Activated CD4-positive, alpha-beta T cell treated with anti-CD3 and anti-CD28 coated beads for 36 hours (primary cell): ENCODE measurements at regions of chr7 and their contacts with region 1.

Region 1: GRCh38 chr7:132049462-132050304 is 493.3 kb upstream of the PODXL start:
- DNase-seq: peak; percentile 64
- ATAC-seq: no peak
- H3K4me3 Mint-ChIP-seq: no peak overlapping the region
- H3K27ac Mint-ChIP-seq: no peak overlapping the region
- H3K4me1 Mint-ChIP-seq: no peaks in the 10 kb centered on the region
- H3K27me3 Mint-ChIP-seq: peaks cover 13% of the 10 kb centered on the region

Region 2: DNA sequence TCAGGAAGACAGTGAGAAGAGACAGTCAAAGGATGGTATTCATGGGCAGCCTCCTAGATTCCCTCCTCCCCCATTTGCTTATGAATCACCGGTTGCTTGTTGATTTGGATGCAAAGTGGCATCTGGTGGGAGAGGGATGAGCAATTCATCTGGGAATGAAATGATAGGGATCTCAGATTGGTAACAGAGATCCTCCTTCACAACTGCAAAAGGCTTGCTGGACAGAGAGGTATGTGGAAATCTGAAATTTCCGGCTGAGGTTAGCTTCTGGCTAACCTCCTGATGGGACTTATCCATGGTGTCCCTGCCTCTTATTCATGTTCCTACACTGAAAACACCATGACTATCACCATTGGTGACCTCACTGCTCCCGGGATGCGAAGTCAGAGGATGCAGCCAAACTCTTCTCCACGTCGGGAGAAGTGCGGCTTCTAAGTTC is 444.8 kb before region 1 on chr7:
- CTCF ChIA-PET with region 1: no interaction called
- POLR2A ChIA-PET with region 1: no interaction called
- intact Hi-C with region 1: no loop called
- DNase-seq: no peak
- ATAC-seq: no peak
- H3K4me3 Mint-ChIP-seq: no peak overlapping the region
- H3K27ac Mint-ChIP-seq: no peak overlapping the region
- H3K4me1 Mint-ChIP-seq: no peaks in the 10 kb centered on the region
- H3K27me3 Mint-ChIP-seq: peaks cover 11% of the 10 kb centered on the region

Region 3: GRCh38 chr7:131859147-131859821 is 190.4 kb before region 1 on chr7:
- CTCF ChIA-PET with region 1: interaction called, 4 read pairs
- POLR2A ChIA-PET with region 1: no interaction called
- intact Hi-C with region 1: loop called in 1 of 2 experiments (anchors 1 kb)
- DNase-seq: peak; percentile 69
- ATAC-seq: peak; percentile 74
- H3K4me3 Mint-ChIP-seq: no peak overlapping the region
- H3K27ac Mint-ChIP-seq: no peak overlapping the region
- H3K4me1 Mint-ChIP-seq: no peaks in the 10 kb centered on the region
- H3K27me3 Mint-ChIP-seq: peaks cover 9% of the 10 kb centered on the region

Region 4: GRCh38 chr7:131945313-131945911 is 104.3 kb before region 1 on chr7:
- CTCF ChIA-PET with region 1: interaction called, 5 read pairs
- POLR2A ChIA-PET with region 1: no interaction called
- intact Hi-C with region 1: loop called (anchors 1 to 5 kb)
- DNase-seq: peak; percentile 69
- ATAC-seq: peak; percentile 64
- H3K4me3 Mint-ChIP-seq: no peak overlapping the region
- H3K27ac Mint-ChIP-seq: no peak overlapping the region
- H3K4me1 Mint-ChIP-seq: no peaks in the 10 kb centered on the region
- H3K27me3 Mint-ChIP-seq: peaks cover 36% of the 10 kb centered on the region